K562 (cell line): ENCODE measurements at regions of chr10 and their contacts with region 1.

Region 1: GRCh38 chr10:23146258-23146657 is 45.9 kb upstream of the PTF1A start:
- DNase-seq: no peak
- ATAC-seq: no peak
- H3K4me3 ChIP-seq: no peak overlapping the region
- H3K27ac ChIP-seq: no peak overlapping the region
- H3K4me1 ChIP-seq: peaks cover 0 to 4% of the 10 kb centered on the region in 2 experiments; a peak in 2 of 5 replicates
- H3K27me3 ChIP-seq: peaks cover 12 to 35% of the 10 kb centered on the region in 2 experiments; a peak in 4 of 5 replicates
- CTCF ChIP-seq: no peak
- EP300 ChIP-seq: no peak
- POLR2A ChIP-seq: no peak
- RAD21 ChIP-seq: no peak

Region 2: DNA sequence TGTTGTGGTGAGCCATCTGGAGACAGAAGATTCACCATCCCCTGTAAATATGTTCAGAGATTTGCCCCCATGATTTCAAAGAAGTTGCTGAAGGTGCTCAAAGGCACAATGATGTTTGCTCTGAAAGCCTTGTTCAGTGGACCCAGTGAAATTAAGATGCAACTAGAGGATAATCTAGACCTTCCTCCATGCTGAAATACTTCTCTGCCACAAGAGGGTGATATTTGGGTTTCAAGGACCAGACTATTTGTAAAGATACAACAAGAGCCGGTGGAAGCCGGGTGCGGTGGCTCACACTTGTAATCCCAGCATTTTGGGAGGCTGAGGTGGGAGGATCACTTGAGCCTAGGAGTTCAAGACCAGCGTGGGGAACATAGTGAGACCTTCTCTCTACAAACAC is 64.4 kb before region 1 on chr10:
- CTCF ChIA-PET with region 1: no interaction called
- POLR2A ChIA-PET with region 1: no interaction called
- in situ Hi-C with region 1: no loop called
- intact Hi-C with region 1: loop called (anchors 5 kb)
- DNase-seq: peak in 3 of 4 experiments; percentile 17 to 52 (median 43)
- ATAC-seq: peak; percentile 93
- H3K4me3 ChIP-seq: no peak overlapping the region
- H3K27ac ChIP-seq: no peak overlapping the region
- H3K4me1 ChIP-seq: no peaks in the 10 kb centered on the region
- H3K27me3 ChIP-seq: peaks cover 0 to 4% of the 10 kb centered on the region in 2 experiments; a peak in 1 of 5 replicates
- CTCF ChIP-seq: peak; percentile 49 to 56 (median 55)
- EP300 ChIP-seq: no peak
- POLR2A ChIP-seq: no peak
- RAD21 ChIP-seq: peak in 1 of 2 experiments; percentile 57; a peak in 3 of 4 replicates